AG04450 (cell line): ENCODE measurements at regions of chr7 and their contacts with region 1.

Region 1: DNA sequence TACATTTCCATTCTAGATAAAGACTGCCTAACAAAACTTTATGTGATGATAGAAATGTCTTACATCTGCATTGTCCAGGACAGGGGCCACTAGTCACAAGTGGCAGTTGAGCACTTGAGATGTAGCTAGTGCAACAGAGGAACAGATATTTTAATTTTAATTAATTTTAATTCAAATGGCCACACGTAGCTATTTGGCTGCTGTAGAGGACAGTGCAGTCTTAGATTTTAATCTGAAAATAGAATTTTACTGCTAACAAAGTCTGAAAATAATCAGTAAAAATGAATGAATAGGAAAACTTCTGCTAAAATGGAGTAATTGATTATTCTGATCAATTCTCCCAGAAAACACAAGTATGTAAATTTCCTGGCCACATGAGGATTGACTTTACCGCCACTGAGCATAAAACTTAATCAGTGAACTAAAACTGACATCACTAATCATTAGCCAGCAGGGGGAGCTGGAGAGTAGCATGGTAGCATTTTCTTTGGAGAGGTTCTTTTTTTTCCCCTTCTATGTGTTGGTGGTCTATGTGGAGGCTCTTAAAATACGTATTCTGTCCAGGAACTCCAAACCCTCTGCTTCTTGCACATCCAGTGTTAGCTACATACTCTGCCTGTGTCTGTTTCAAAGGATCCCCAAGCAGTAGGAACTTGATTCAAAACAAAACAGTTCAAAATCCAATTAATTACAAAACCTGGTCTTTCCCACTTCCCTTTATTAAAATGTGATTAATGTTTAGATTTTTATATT is 52.1 kb downstream of the TSPAN12 start:
- DNase-seq: no peak
- H3K4me3 ChIP-seq: no peak overlapping the region
- H3K27ac ChIP-seq: no peak overlapping the region
- H3K27me3 ChIP-seq: no peaks in the 10 kb centered on the region
- CTCF ChIP-seq: peak; percentile 90

Region 2: DNA sequence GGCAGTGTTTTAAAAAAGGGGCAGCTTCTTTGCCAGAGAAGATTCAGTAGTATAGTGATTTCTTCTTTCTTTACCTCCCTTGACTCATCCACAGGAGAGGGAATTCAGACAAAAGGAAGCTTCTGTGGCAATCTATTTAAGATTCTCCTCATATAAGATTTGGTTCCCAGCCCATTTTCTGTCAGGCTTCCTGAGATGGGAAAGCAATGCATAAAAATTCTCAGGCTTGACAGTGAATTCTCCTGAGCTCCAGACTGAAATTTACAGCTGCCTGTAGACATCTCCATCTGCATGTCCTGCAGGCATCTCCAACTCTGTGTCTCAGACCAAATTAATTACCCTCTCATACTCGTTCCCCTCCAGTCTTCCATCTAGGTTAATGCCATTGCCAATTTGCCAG is 20.7 kb before region 1 on chr7:
- CTCF ChIA-PET with region 1: interaction called, 58 read pairs
- POLR2A ChIA-PET with region 1: no interaction called
- DNase-seq: no peak
- H3K4me3 ChIP-seq: no peak overlapping the region
- H3K27ac ChIP-seq: no peak overlapping the region
- H3K27me3 ChIP-seq: no peaks in the 10 kb centered on the region
- CTCF ChIP-seq: no peak

Region 3: DNA sequence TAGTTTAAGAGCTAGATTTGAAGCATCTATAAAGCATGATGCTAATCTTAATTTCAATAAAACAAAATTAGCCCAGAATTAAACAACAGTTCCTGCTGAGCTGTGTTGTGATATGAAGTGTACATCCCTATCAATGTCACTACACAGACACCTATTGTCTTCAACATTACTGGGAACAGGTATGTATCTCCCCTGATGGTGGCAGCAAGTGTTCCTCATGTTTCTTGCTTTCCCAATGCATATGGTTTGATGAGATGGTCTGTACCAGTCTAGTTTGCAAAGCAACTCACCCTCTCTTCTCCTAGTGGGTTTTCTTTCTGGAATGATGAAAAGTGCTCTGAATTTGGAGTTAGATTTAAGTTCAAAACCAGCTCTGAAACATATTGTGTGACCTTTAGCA is 14.1 kb after region 1 on chr7:
- CTCF ChIA-PET with region 1: interaction called, 12 read pairs
- POLR2A ChIA-PET with region 1: no interaction called
- DNase-seq: no peak
- H3K4me3 ChIP-seq: no peak overlapping the region
- H3K27ac ChIP-seq: no peak overlapping the region
- H3K27me3 ChIP-seq: no peaks in the 10 kb centered on the region
- CTCF ChIP-seq: no peak

Region 4: GRCh38 chr7:120852700-120853099 is 46.9 kb after region 1 on chr7:
- CTCF ChIA-PET with region 1: interaction called, 17 read pairs
- POLR2A ChIA-PET with region 1: interaction called, 5 read pairs
- DNase-seq: no peak
- H3K4me3 ChIP-seq: no peak overlapping the region
- H3K27ac ChIP-seq: no peak overlapping the region
- H3K27me3 ChIP-seq: no peaks in the 10 kb centered on the region
- CTCF ChIP-seq: no peak

Region 5: GRCh38 chr7:120873401-120873800 is 67.6 kb after region 1 on chr7:
- CTCF ChIA-PET with region 1: interaction called, 11 read pairs
- POLR2A ChIA-PET with region 1: no interaction called
- DNase-seq: no peak
- H3K4me3 ChIP-seq: no peak overlapping the region
- H3K27ac ChIP-seq: no peak overlapping the region
- H3K27me3 ChIP-seq: peaks cover 3% of the 10 kb centered on the region
- CTCF ChIP-seq: no peak

Region 6: GRCh38 chr7:120941064-120941463 is 135.3 kb after region 1 on chr7:
- CTCF ChIA-PET with region 1: interaction called, 15 read pairs
- POLR2A ChIA-PET with region 1: no interaction called
- DNase-seq: no peak
- H3K4me3 ChIP-seq: no peak overlapping the region
- H3K27ac ChIP-seq: no peak overlapping the region
- H3K27me3 ChIP-seq: no peaks in the 10 kb centered on the region
- CTCF ChIP-seq: peak; percentile 22; the same call in 1 of the 2 replicates

Region 7: DNA sequence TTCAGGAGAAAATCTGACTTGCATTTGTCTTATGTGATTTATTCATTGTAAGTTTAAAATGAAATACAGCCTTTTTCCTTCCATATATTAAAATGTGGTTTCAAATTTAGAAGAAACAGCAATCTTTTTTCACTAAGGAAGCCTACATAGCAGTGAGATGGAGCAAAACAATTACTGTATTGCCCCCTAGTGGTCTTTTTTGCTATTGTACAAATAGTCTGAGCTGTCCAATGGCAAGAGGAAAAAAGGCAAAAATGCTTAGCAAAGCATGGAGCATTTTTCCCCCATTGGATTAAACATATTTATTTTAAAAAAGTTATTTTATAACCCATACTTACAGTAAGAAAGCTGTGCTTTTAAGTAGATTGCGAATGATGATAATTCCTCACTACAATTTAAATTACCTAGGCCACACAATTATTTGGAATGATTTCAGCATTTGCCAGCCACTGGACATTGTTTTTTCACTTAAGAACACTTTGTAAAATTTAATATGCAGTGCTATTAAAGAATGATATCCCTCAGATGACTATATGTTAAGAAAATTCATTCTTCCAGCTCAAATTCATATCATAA is 302.2 kb after region 1 on chr7:
- CTCF ChIA-PET with region 1: interaction called, 25 read pairs
- POLR2A ChIA-PET with region 1: no interaction called
- DNase-seq: no peak
- H3K4me3 ChIP-seq: no peak overlapping the region
- H3K27ac ChIP-seq: no peak overlapping the region
- H3K27me3 ChIP-seq: no peaks in the 10 kb centered on the region
- CTCF ChIP-seq: peak; percentile 78